Transverse colon (tissue), 4 donors: ENCODE measurements at regions of chr11 and their contacts with region 1.

Region 1: DNA sequence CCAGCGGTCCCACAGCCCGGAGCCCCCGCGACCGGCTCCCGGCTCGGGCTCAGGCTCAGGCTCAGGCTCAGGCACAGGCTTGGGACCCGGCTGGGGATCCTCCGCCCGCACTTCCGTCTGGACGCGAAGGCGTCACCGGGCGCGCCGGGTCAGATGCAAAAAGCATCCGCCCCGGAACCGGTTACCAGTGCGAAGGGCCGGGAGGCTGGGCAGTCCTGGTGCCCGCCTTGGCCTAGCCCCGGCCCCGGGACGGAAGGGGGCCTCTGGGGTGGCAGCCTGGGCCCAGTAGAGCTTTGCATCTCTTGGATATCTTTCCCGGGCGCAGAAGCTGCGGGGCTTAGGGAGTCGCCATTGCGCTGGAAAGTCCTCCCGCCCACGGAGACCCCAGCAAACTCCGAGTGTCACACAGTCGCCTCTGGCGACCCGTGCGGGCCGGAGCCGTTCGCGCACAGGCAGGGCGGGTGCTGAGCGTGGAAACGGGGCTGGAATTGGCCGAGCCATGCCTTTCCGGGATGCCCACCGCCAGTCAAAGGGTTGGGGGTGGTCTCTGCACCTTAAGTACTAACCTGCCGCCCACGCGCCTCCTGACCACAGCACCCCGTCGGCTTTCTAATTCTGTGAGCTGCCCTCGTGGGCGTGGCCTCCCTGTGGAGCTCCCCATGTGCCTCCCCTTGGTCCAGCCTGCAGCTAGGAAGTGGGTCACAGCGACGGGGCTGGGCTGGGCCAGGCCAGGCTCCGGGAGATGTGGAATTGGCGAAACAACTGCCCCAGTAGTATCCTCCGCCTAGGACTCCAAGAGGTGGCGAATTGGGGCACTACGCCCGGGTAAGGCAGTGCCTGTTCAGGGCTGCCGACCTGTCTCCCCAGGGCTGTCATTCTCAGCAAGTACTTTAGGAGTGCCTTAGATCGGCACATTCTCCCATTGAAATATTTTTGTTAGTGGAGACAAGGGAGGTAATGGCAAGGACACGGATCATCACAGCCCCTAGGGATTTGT is at the start of gene TMEM9B:
- DNase-seq: peak; percentile 94
- H3K4me3 ChIP-seq: peak within 1 kb of the TSS; percentile 61 to 87 (median 78)
- H3K27ac ChIP-seq: peak within 1 kb of the TSS; percentile 93 to 99 (median 96)
- H3K4me1 ChIP-seq: peaks cover 11 to 28% (median 21%) of the 10 kb centered on the region in 4 donors
- H3K27me3 ChIP-seq: no peaks in the 10 kb centered on the region
- CTCF ChIP-seq: peak in 1 of 5 experiments; percentile 2
- EP300 ChIP-seq: no peak
- POLR2A ChIP-seq: peak; percentile 97
- total RNA-seq, gene TMEM9B: 20.5 to 93.9 (median 58.5) TPM

Region 2: GRCh38 chr11:8682303-8683114 is 282.1 kb before region 1 on chr11 and contains the starts of genes RPL27A and TRIM66:
- in situ Hi-C with region 1: loop called in 3 of 4 experiments (anchors 25 kb)
- intact Hi-C with region 1: loop called (anchors 5 kb)
- DNase-seq: peak; percentile 99
- H3K4me3 ChIP-seq: peak within 1 kb of the TSS; percentile 76 to 96 (median 89)
- H3K27ac ChIP-seq: peak within 1 kb of the TSS; percentile 94 to 98 (median 96)
- H3K4me1 ChIP-seq: peaks cover 14 to 43% (median 21%) of the 10 kb centered on the region in 4 donors
- H3K27me3 ChIP-seq: no peaks in the 10 kb centered on the region
- CTCF ChIP-seq: peak in 2 of 5 experiments; percentile 52 to 55
- EP300 ChIP-seq: no peak
- POLR2A ChIP-seq: peak; percentile 99
- total RNA-seq, gene RPL27A: 462 to 843 (median 770) TPM
- total RNA-seq, gene TRIM66: 11.7 to 19.7 (median 14.3) TPM

Region 3: DNA sequence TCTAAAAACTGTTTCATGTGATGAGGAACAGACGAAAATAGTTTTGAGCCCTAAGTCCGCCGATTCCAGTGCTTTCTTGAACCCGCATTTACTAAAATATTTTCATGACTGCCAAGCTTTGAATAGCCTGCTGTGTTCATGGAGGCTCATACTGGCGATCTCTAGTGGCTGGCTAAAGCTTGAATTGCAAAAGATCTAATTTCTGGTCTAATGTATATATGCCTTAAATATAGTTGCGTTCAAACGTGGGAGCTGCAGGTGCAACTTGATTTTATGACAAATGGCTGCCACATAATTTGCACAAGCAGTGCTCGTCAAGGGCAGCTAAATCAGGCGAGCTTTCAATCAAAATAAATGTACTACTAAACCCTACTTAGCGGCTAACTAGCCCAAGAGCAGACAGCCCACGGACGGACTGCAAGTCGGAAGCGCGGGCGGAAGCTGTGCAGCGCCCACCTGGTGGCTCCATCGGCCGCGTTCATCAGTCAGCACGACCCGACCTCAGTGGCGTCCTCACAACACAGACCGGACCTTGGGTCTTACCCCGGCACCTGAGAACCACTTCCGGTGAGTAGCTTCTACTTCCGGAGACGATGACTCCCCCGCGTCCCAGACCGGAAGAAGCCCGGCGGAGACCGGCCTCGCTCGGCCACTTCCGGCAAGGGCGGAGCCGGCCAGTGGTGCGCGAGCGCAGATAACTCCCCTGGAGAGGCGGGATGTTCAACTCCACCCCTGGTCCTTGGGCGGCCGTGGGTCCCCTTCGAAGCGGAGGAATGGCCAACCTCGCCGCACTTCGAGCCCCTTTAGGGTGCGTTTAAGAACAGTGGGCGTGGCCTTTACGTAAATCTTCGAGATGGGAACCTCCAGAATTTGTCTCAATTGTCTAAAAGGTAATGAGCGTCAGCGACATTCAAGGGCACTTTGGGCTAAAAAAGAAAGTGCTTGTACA is 275.9 kb before region 1 on chr11:
- in situ Hi-C with region 1: loop called in 3 of 4 experiments (anchors 25 kb)
- intact Hi-C with region 1: loop called (anchors 5 kb)
- DNase-seq: peak; percentile 96
- H3K4me3 ChIP-seq: peak overlapping the region; percentile 44 to 61 (median 50)
- H3K27ac ChIP-seq: peak overlapping the region; percentile 84 to 95 (median 92)
- H3K4me1 ChIP-seq: peaks cover 13 to 47% (median 25%) of the 10 kb centered on the region in 4 donors
- H3K27me3 ChIP-seq: no peaks in the 10 kb centered on the region
- CTCF ChIP-seq: peak in 2 of 5 experiments; percentile 10 to 29
- EP300 ChIP-seq: no peak
- POLR2A ChIP-seq: peak; percentile 92

Region 4: DNA sequence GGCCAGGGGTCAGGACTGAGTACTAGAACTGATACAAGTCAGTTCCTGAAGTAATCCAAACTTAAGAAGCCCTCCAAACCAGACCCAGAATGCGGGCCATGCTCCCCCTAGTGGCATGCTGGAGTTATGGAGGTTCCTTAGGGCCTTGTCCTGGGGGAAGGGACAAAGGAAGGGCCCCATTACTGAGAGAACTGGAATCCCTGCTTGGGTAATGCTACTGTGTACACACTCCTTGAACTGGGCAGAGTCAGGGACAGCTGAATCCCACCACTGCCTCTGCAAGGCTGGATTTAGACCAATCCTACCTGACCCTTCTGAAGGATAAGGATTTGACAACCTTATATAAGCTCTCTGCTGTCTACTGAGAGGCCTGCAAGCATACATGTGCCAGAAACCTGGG is 151.0 kb before region 1 on chr11:
- in situ Hi-C with region 1: no loop called
- intact Hi-C with region 1: no loop called
- DNase-seq: peak; percentile 80
- H3K4me3 ChIP-seq: no peak overlapping the region
- H3K27ac ChIP-seq: peak overlapping the region; percentile 63 to 91 (median 90)
- H3K4me1 ChIP-seq: peaks cover 10 to 48% (median 30%) of the 10 kb centered on the region in 4 donors
- H3K27me3 ChIP-seq: no peaks in the 10 kb centered on the region
- CTCF ChIP-seq: peak; percentile 82 to 94 (median 84)
- EP300 ChIP-seq: no peak
- POLR2A ChIP-seq: no peak

Region 5: DNA sequence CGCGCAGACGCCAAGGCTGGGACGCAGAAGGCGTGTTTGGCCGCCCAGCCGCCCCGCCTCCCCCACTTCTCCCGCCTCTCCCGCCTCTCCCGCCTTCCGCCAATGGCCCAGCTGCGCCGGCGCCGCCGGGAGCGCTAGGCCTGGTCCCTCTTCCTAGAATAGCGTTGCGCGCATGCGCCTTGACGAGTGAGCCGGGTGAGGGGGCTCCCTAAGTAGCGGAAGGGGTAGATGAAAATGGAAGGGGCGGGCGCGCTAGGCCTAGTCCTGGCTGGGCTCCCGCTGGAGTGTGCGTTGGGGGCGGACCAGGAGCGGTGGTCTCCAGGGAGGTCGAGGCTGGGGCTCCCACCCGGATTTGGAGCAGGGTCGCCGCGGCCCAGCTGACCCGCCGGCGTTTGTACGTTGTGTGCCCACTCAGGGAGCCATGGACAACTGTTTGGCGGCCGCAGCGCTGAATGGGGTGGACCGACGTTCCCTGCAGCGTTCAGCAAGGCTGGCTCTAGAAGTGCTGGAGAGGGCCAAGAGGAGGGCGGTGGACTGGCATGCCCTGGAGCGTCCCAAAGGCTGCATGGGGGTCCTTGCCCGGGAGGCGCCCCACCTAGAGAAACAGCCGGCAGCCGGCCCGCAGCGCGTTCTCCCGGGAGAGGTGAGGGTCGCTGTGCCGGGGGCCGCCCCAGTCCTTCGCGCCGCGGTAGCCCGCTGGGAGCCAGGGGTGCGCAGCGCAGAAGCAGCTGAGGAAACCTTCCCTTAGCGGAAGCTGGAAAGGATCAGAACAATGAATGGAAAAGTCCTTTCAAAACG is 53.4 kb before region 1 on chr11 and contains the start of gene AKIP1:
- in situ Hi-C with region 1: no loop called
- intact Hi-C with region 1: loop called (anchors 5 kb)
- DNase-seq: peak; percentile 95
- H3K4me3 ChIP-seq: peak within 1 kb of the TSS; percentile 65 to 100 (median 72)
- H3K27ac ChIP-seq: peak within 1 kb of the TSS; percentile 85 to 99 (median 94)
- H3K4me1 ChIP-seq: peaks cover 10 to 31% (median 22%) of the 10 kb centered on the region in 4 donors
- H3K27me3 ChIP-seq: no peaks in the 10 kb centered on the region
- CTCF ChIP-seq: no peak
- EP300 ChIP-seq: no peak
- POLR2A ChIP-seq: peak; percentile 40
- total RNA-seq, gene AKIP1: 5.2 to 21.2 (median 11.0) TPM